ENCODE measurements at regions of chr13 and their contacts with region 1.

Region 1: GRCh38 chr13:87536499-87536898 is 134.7 kb upstream of the SLITRK5 start:
- DNase-seq: no peak
- ATAC-seq: peak; percentile 84
- H3K4me3 ChIP-seq: no peak overlapping the region
- H3K27ac ChIP-seq: no peak overlapping the region
- H3K4me1 ChIP-seq: no peaks in the 10 kb centered on the region
- H3K27me3 ChIP-seq: no peaks in the 10 kb centered on the region
- CTCF ChIP-seq: no peak
- EP300 ChIP-seq: peak; percentile 10 to 51; a peak in 2 of 4 replicates
- POLR2A ChIP-seq: no peak
- RAD21 ChIP-seq: no peak

Region 2: DNA sequence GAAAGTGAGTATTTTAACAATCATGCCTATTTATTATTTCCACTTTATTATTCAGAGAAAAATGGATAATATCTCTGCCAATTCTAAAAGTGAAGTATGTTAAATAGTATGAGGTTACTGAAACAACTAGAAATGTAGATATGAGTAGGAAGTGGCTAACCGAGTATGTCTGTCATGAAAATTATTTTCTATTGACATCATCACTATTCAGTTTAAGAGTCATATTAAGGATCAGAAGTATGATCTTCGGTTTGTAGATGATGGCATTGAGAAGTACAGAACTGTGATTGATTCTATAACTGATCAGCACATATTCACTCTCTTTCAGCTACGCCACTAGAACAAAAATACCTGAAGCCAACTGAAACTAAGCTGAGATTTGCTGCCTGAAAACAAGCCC is 11.7 kb before region 1 on chr13:
- CTCF ChIA-PET with region 1: interaction called, 5 read pairs
- POLR2A ChIA-PET with region 1: interaction called, 7 read pairs
- RAD21 ChIA-PET with region 1: interaction called, 6 read pairs
- SMC1A ChIA-PET with region 1: interaction called, 14 read pairs
- in situ Hi-C with region 1: no loop called
- intact Hi-C with region 1: no loop called
- DNase-seq: no peak
- ATAC-seq: peak; percentile 81
- H3K4me3 ChIP-seq: no peak overlapping the region
- H3K27ac ChIP-seq: no peak overlapping the region
- H3K4me1 ChIP-seq: no peaks in the 10 kb centered on the region
- H3K27me3 ChIP-seq: no peaks in the 10 kb centered on the region
- CTCF ChIP-seq: no peak
- EP300 ChIP-seq: no peak
- POLR2A ChIP-seq: no peak
- RAD21 ChIP-seq: no peak

Region 3: DNA sequence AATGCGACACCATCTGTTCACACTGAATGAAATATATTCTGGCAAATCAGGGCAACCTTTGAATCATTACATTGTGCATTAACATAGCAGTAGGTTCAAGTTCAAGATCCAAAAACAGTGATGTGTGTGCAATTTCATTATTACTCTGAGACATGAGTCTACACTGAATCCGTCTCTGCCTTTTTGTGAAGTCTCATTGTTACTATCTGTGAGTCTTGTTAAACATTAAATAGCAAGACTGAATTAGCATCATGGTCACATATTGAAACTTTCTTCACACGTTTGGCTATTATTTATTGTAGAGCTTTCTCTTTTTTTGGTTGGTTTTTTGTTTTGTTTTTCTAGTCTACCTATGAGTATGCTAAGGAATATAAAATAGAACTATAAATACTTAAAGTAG is 17.5 kb after region 1 on chr13:
- CTCF ChIA-PET with region 1: interaction called, 5 read pairs
- POLR2A ChIA-PET with region 1: interaction called, 5 read pairs
- RAD21 ChIA-PET with region 1: interaction called, 34 read pairs
- SMC1A ChIA-PET with region 1: interaction called, 62 read pairs
- in situ Hi-C with region 1: no loop called
- intact Hi-C with region 1: no loop called
- DNase-seq: no peak
- ATAC-seq: peak; percentile 86
- H3K4me3 ChIP-seq: no peak overlapping the region
- H3K27ac ChIP-seq: no peak overlapping the region
- H3K4me1 ChIP-seq: no peaks in the 10 kb centered on the region
- H3K27me3 ChIP-seq: no peaks in the 10 kb centered on the region
- CTCF ChIP-seq: no peak
- EP300 ChIP-seq: peak in 1 of 2 experiments; percentile 24; a peak in 1 of 4 replicates
- POLR2A ChIP-seq: no peak
- RAD21 ChIP-seq: no peak

Measured in GM12878 (cell line).